HEK293 (cell line): ENCODE measurements at regions of chr13 and their contacts with region 1.

Region 1: DNA sequence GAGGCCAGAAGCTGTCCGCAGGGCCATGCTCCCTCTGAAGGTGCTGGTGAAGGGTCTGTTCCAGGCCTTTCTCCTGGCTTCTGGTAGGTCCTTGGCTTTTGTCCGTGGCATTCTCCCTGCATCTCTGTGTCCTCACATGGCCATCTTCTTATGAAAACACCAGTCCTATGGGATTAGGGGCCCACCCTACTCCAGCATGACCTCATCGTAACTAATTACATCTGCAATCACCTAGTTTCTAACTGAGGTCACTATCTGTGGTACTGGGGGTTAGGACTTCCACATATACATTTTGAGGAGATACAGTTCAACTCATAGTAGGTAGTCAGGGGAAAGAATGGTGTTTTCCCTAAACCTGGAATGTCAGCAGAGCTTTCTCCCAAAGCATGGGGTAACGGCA is 3.1 kb downstream of the C13orf42 start:
- H3K4me3 ChIP-seq: no peak overlapping the region
- H3K27ac ChIP-seq: no peak overlapping the region
- H3K4me1 ChIP-seq: no peaks in the 10 kb centered on the region
- CTCF ChIP-seq: no peak

Region 2: GRCh38 chr13:51125498-51126226 is 17.7 kb after region 1 on chr13:
- CTCF ChIA-PET with region 1: interaction called, 12 read pairs
- POLR2A ChIA-PET with region 1: no interaction called
- H3K4me3 ChIP-seq: no peak overlapping the region
- H3K27ac ChIP-seq: no peak overlapping the region
- H3K4me1 ChIP-seq: no peaks in the 10 kb centered on the region
- CTCF ChIP-seq: peak; percentile 42; the same call in 1 of the 2 replicates